Activated CD4-positive, alpha-beta T cell treated with anti-CD3 and anti-CD28 coated beads, Interleukin-2, amount 10 ng/mL, durations not matched to agents 24 days and 14 days (primary cell): ENCODE measurements at regions of chr2 and their contacts with region 1.

Region 1: DNA sequence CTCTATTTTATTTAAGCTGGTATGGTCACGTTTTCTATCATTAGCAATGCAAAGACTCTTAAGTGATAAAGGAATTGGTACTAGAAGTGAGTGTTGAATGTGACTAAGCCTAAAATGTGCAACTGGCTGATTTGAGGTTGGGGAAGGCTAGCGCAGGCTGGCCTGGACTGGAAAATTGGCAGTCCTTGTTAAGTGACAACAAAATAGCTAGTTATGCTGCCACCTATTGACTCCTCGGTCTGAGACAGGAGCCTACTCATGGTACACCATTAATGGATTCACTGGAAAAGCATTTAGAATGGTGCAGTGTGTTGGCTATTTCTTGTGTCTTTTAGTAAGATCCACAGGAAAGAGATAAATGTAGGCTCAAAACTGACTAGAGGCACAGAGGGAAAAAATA is 5.7 kb upstream of the WIPF1 start:
- DNase-seq: peak; percentile 84
- H3K4me3 Mint-ChIP-seq: no peak overlapping the region
- H3K27ac Mint-ChIP-seq: peak overlapping the region; percentile 81
- H3K4me1 Mint-ChIP-seq: peaks cover 78% of the 10 kb centered on the region
- H3K27me3 Mint-ChIP-seq: no peaks in the 10 kb centered on the region

Region 2: DNA sequence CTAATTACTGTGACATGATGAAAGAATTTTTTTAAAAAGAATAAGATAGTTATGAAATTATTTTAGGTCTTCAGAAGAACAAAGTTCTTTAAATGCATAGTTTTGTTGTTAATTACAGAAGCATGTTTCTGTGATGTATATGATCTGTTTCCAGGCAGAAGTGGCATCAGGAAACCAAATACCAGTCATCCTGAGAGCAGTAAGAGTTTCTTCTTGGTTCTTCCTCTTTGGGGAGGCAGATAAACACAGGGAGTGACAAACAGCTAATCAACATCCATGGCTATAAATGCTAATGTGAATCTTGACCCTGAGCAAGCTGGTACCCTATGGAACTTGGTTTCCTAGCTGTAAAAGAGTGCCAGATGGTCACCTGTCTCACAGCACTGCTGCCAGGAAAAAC is 34.9 kb before region 1 on chr2:
- intact Hi-C with region 1: loop called (anchors 1 kb)
- DNase-seq: no peak
- H3K4me3 Mint-ChIP-seq: no peak overlapping the region
- H3K27ac Mint-ChIP-seq: peak overlapping the region; percentile 40
- H3K4me1 Mint-ChIP-seq: peaks cover 43% of the 10 kb centered on the region
- H3K27me3 Mint-ChIP-seq: no peaks in the 10 kb centered on the region

Region 3: DNA sequence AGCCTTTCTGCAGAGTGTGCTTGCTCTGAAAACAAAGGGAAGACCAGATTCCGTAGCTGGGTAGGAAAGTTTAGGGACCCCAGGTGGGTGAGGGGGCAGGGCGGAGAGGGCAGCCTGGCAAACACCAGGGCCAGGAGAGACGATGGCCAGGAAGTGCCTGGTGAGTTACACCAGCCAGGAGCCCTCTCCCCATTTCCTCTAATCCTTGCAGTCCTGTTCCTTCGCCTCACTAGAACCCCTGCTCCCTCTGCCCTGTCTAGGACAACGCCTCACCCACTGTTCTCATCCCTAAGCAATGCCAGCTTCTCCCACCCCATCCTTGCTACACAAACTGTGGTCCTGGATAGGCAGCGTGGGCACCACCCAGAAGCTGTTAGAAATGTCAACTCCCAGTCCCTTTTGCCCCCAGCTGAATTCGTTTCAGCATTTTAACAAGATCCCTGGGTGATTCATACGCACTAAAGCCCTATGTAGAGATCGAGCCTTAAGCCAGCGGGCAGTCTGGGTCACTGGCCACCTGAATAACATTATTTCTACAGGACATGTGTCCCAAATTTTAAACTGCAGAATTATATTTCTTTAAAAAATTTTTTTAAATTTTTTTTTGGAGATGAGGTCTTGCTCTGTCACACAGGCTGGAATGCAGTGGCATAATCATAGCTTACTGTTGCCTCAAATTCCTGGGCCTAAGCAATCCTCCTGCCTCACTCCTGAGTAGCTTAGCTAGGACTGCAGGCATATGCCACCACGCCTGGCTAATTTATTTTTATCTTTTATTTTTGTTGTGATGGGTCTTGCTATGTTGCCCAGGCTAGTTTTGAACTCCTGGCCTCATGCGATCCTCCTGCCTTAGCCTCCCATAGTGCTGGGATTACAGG is 16.6 kb before region 1 on chr2:
- intact Hi-C with region 1: no loop called
- DNase-seq: no peak
- H3K4me3 Mint-ChIP-seq: no peak overlapping the region
- H3K27ac Mint-ChIP-seq: peak overlapping the region; percentile 92
- H3K4me1 Mint-ChIP-seq: peaks cover 74% of the 10 kb centered on the region
- H3K27me3 Mint-ChIP-seq: no peaks in the 10 kb centered on the region

Region 4: GRCh38 chr2:174615871-174616436 is 12.7 kb after region 1 on chr2:
- intact Hi-C with region 1: loop called (anchors 1 kb)
- DNase-seq: peak; percentile 73
- H3K4me3 Mint-ChIP-seq: peak overlapping the region; percentile 49
- H3K27ac Mint-ChIP-seq: peak overlapping the region; percentile 90
- H3K4me1 Mint-ChIP-seq: peaks cover 72% of the 10 kb centered on the region
- H3K27me3 Mint-ChIP-seq: no peaks in the 10 kb centered on the region

Region 5: GRCh38 chr2:174688079-174688478 is 84.8 kb after region 1 on chr2:
- intact Hi-C with region 1: loop called (anchors 1 kb)
- DNase-seq: no peak
- H3K4me3 Mint-ChIP-seq: no peak overlapping the region
- H3K27ac Mint-ChIP-seq: no peak overlapping the region
- H3K4me1 Mint-ChIP-seq: peaks cover 30% of the 10 kb centered on the region
- H3K27me3 Mint-ChIP-seq: no peaks in the 10 kb centered on the region